ENCODE measurements at regions of chr1 and their contacts with region 1.

Region 1: DNA sequence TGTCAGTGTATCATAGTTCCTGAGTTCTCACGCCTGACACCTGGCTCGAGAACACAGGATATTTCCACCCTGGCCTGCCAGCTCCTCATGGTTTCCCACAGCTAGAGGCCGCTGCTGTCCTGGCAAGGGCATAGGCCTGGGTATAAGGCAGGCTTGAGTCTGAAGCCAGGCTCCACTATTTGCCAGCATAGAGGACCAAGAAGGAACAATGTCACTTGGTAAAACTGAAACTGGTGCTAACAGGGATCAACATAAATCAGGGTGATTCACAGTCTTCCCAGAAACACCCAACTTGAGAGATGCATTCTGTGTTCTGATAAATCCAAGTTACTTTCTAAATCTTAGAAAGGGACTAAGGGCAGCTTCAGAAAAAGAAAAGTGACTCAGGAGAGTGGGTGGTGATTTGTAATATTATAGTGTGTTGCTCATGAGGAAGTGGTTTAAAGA is 6.9 kb upstream of the S100A2 start:
- DNase-seq: peak; percentile 85 to 93 (median 92)
- ATAC-seq: peak; percentile 89
- H3K4me3 ChIP-seq: no peak overlapping the region
- H3K27ac ChIP-seq: peak overlapping the region; percentile 4 to 64 (median 41)
- H3K4me1 ChIP-seq: peaks cover 20% of the 10 kb centered on the region
- H3K27me3 ChIP-seq: no peaks in the 10 kb centered on the region
- CTCF ChIP-seq: peak; percentile 84 to 96 (median 93)
- POLR2A ChIP-seq: no peak

Region 2: GRCh38 chr1:153509729-153510354 is 62.8 kb before region 1 on chr1:
- intact Hi-C with region 1: loop called (anchors 5 kb)
- DNase-seq: peak in 2 of 4 donors; percentile 42 to 49
- ATAC-seq: no peak
- H3K4me3 ChIP-seq: no peak overlapping the region
- H3K27ac ChIP-seq: no peak overlapping the region
- H3K4me1 ChIP-seq: peaks cover 10% of the 10 kb centered on the region
- H3K27me3 ChIP-seq: no peaks in the 10 kb centered on the region
- CTCF ChIP-seq: peak in 6 of 7 experiments; percentile 23 to 49 (median 33)
- POLR2A ChIP-seq: no peak

Region 3: DNA sequence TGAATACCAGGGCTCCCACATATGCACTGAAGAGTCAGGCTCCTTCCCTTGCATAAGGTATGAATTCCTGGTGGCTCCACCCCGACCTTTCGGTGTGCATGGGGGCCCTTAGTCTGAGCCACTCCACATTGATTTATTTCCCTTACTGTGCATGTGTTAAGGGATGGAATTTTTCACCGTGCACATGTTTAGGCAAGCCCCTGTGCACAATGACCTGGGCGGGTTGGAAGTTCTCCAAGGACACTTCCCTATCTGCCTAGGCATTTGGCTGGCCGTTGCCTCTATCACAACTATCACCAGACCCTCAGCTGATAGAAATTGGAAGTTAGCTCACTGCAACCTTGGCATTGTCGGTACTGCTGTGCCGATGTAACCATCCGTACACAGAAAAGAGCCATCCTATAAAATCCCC is 46.5 kb before region 1 on chr1:
- intact Hi-C with region 1: loop called (anchors 5 kb)
- DNase-seq: no peak
- ATAC-seq: peak; percentile 35
- H3K4me3 ChIP-seq: no peak overlapping the region
- H3K27ac ChIP-seq: no peak overlapping the region
- H3K4me1 ChIP-seq: peaks cover 8% of the 10 kb centered on the region
- H3K27me3 ChIP-seq: no peaks in the 10 kb centered on the region
- CTCF ChIP-seq: no peak
- POLR2A ChIP-seq: no peak

Measured in body of pancreas (tissue), 4 donors.